GM12878 (cell line): ENCODE measurements at regions of chr2 and their contacts with region 1.

Region 1: GRCh38 chr2:71306762-71307161 is 24.8 kb upstream of the ZNF638 start:
- DNase-seq: no peak
- ATAC-seq: no peak
- H3K4me3 ChIP-seq: no peak overlapping the region
- H3K27ac ChIP-seq: no peak overlapping the region
- H3K4me1 ChIP-seq: no peaks in the 10 kb centered on the region
- H3K27me3 ChIP-seq: no peaks in the 10 kb centered on the region
- CTCF ChIP-seq: no peak
- EP300 ChIP-seq: no peak
- POLR2A ChIP-seq: no peak
- RAD21 ChIP-seq: no peak

Region 2: GRCh38 chr2:71261534-71261933 is 45.2 kb before region 1 on chr2:
- CTCF ChIA-PET with region 1: no interaction called
- POLR2A ChIA-PET with region 1: no interaction called
- RAD21 ChIA-PET with region 1: no interaction called
- SMC1A ChIA-PET with region 1: no interaction called
- in situ Hi-C with region 1: no loop called
- intact Hi-C with region 1: no loop called
- DNase-seq: no peak
- ATAC-seq: no peak
- H3K4me3 ChIP-seq: no peak overlapping the region
- H3K27ac ChIP-seq: no peak overlapping the region
- H3K4me1 ChIP-seq: no peaks in the 10 kb centered on the region
- H3K27me3 ChIP-seq: no peaks in the 10 kb centered on the region
- CTCF ChIP-seq: no peak
- EP300 ChIP-seq: no peak
- POLR2A ChIP-seq: no peak
- RAD21 ChIP-seq: no peak

Region 3: DNA sequence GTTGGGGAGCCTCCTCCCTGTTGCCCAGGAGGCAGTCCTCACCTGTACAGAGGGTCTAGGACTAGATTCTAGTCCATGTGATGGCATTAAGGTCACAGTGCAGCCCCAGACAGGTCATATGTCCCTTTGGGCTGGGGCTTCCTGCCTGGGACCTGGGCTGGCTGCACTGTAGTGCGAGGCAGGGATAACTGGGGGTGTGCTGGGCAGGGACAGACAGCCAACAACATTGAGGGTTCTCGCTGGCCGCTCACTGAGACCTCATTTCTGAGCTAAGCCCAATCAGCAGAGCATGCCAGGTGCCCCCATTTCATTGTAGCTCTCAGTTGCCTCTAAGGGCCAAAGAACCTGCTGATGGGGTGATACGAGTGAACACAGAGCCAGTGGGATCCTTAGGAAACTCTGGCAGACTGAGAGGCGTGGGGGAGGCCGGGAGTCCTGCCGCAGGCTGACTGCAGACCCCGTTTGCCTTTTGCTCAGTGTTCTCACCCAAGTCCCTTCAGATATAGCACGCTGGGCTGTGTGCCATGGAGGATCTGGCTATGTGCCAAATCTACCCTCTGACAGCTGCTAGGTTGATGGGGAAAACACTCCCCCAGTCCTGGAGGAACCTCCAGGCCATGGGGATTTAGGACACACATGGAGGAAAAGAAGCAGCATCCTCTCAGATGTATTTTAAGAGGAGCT is 198.5 kb after region 1 on chr2:
- CTCF ChIA-PET with region 1: interaction called, 6 read pairs
- POLR2A ChIA-PET with region 1: interaction called, 3 read pairs
- RAD21 ChIA-PET with region 1: no interaction called
- SMC1A ChIA-PET with region 1: interaction called, 6 read pairs
- in situ Hi-C with region 1: loop called (anchors 5 kb)
- intact Hi-C with region 1: no loop called
- DNase-seq: no peak
- ATAC-seq: no peak
- H3K4me3 ChIP-seq: no peak overlapping the region
- H3K27ac ChIP-seq: no peak overlapping the region
- H3K4me1 ChIP-seq: no peaks in the 10 kb centered on the region
- H3K27me3 ChIP-seq: no peaks in the 10 kb centered on the region
- CTCF ChIP-seq: no peak
- EP300 ChIP-seq: no peak
- POLR2A ChIP-seq: no peak
- RAD21 ChIP-seq: no peak